GM12878 (cell line): ENCODE measurements at regions of chr10 and their contacts with region 1.

Region 1: DNA sequence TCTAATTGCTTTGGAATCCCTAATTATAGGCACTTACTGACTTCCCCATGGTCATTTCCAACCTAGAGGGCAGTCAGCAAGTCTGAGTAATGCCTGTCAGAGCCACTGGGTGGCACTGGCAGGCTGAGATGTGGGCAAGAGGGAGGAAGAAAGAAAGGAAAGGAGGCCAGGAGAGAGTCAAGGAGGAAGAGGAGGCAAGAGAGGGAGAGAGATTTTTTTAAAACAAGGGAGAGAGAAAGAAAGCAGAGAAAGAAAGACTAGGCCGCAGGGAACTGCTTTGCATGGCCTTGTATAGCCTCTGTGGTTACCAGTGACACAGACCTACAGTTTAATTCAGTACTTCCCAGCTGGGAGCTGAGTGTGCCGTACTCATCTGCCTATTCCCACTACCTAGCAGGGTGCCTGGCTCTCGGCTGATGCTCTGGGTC is 210.4 kb upstream of the ADO start:
- DNase-seq: peak; percentile 30
- ATAC-seq: peak; percentile 94
- H3K4me3 ChIP-seq: no peak overlapping the region
- H3K27ac ChIP-seq: no peak overlapping the region
- H3K4me1 ChIP-seq: peaks cover 7% of the 10 kb centered on the region
- H3K27me3 ChIP-seq: no peaks in the 10 kb centered on the region
- CTCF ChIP-seq: peak; percentile 90 to 97 (median 95)
- EP300 ChIP-seq: no peak
- POLR2A ChIP-seq: no peak
- RAD21 ChIP-seq: peak; percentile 100

Region 2: GRCh38 chr10:62577666-62578291 is 16.3 kb before region 1 on chr10:
- CTCF ChIA-PET with region 1: interaction called, 16 read pairs
- POLR2A ChIA-PET with region 1: no interaction called
- RAD21 ChIA-PET with region 1: interaction called, 5 read pairs
- SMC1A ChIA-PET with region 1: interaction called, 10 read pairs
- in situ Hi-C with region 1: no loop called
- intact Hi-C with region 1: no loop called
- DNase-seq: no peak
- ATAC-seq: no peak
- H3K4me3 ChIP-seq: no peak overlapping the region
- H3K27ac ChIP-seq: no peak overlapping the region
- H3K4me1 ChIP-seq: no peaks in the 10 kb centered on the region
- H3K27me3 ChIP-seq: peaks cover 0 to 2% of the 10 kb centered on the region in 2 experiments; a peak in 2 of 4 replicates
- CTCF ChIP-seq: no peak
- EP300 ChIP-seq: no peak
- POLR2A ChIP-seq: no peak
- RAD21 ChIP-seq: no peak

Region 3: DNA sequence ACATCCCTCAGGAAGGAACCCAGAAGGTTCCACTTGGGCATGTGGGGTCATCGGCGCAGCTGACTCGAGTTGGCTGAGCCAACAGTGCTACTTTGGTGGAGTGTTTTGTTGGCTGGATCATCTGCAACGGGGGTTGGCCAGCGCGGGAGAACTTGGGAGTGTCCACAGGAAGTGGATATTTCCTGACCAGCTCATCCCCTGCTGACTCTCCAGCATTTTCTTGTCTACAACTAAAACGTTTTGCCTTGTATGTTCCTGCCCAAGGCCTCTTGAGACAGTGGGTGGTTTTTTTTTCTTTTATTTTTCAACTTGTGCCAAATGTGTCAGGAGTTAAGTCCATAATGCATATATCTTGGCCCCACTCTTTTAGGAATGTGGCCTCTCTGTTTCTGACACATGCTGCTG is 11.3 kb before region 1 on chr10:
- CTCF ChIA-PET with region 1: interaction called, 16 read pairs
- POLR2A ChIA-PET with region 1: no interaction called
- RAD21 ChIA-PET with region 1: interaction called, 5 read pairs
- SMC1A ChIA-PET with region 1: interaction called, 14 read pairs
- in situ Hi-C with region 1: no loop called
- intact Hi-C with region 1: no loop called
- DNase-seq: no peak
- ATAC-seq: no peak
- H3K4me3 ChIP-seq: no peak overlapping the region
- H3K27ac ChIP-seq: no peak overlapping the region
- H3K4me1 ChIP-seq: no peaks in the 10 kb centered on the region
- H3K27me3 ChIP-seq: no peaks in the 10 kb centered on the region
- CTCF ChIP-seq: no peak
- EP300 ChIP-seq: no peak
- POLR2A ChIP-seq: no peak
- RAD21 ChIP-seq: no peak

Region 4: GRCh38 chr10:62992145-62992721 is 398.1 kb after region 1 on chr10:
- CTCF ChIA-PET with region 1: interaction called, 11 read pairs
- POLR2A ChIA-PET with region 1: no interaction called
- RAD21 ChIA-PET with region 1: interaction called, 3 read pairs
- SMC1A ChIA-PET with region 1: no interaction called
- in situ Hi-C with region 1: no loop called
- intact Hi-C with region 1: no loop called
- DNase-seq: peak; percentile 40
- ATAC-seq: peak; percentile 91
- H3K4me3 ChIP-seq: no peak overlapping the region; the same call in 1 of the 2 replicates
- H3K27ac ChIP-seq: peak overlapping the region; percentile 56
- H3K4me1 ChIP-seq: peaks cover 8% of the 10 kb centered on the region
- H3K27me3 ChIP-seq: no peaks in the 10 kb centered on the region
- CTCF ChIP-seq: no peak
- EP300 ChIP-seq: no peak; a peak in 1 of 4 replicates
- POLR2A ChIP-seq: no peak
- RAD21 ChIP-seq: no peak

Region 5: DNA sequence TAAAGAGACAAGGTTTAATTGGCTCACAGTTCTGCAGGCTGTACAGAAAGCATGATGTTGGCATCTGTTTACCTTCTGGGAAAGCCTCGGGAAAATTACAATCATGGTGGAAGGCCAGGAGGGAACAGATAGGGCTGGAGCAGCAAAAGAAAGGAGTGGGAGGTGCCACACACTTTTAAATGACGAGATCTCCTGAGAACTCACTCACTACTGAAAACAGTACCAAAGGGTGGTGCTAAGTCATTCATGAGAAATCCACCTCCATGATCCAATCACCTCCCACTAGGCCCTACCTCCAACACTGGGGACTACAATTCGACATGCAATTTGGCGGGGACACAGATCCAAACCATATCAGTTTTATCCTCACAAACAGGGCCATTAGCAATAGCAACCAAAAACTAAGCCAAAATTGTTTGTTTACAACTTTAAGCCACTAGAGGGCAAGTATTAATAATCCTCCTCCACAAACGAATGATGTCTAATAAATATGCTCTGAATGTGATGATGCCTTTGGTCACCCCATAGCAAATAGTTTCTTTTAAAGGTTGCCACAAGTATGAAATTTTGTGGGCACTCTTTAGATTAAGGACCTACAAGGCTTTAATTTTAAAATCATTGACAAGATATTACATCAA is 409.8 kb after region 1 on chr10:
- CTCF ChIA-PET with region 1: interaction called, 6 read pairs
- POLR2A ChIA-PET with region 1: no interaction called
- RAD21 ChIA-PET with region 1: interaction called, 6 read pairs
- SMC1A ChIA-PET with region 1: no interaction called
- in situ Hi-C with region 1: no loop called
- intact Hi-C with region 1: loop called (anchors 5 kb)
- DNase-seq: no peak
- ATAC-seq: peak; percentile 64; the same call in 2 of the 3 replicates
- H3K4me3 ChIP-seq: no peak overlapping the region
- H3K27ac ChIP-seq: no peak overlapping the region
- H3K4me1 ChIP-seq: no peaks in the 10 kb centered on the region
- H3K27me3 ChIP-seq: peaks cover 0 to 3% of the 10 kb centered on the region in 2 experiments; a peak in 1 of 4 replicates
- CTCF ChIP-seq: peak; percentile 28 to 53 (median 30); a peak in 4 of 6 replicates
- EP300 ChIP-seq: no peak
- POLR2A ChIP-seq: no peak
- RAD21 ChIP-seq: peak; percentile 38

Region 6: DNA sequence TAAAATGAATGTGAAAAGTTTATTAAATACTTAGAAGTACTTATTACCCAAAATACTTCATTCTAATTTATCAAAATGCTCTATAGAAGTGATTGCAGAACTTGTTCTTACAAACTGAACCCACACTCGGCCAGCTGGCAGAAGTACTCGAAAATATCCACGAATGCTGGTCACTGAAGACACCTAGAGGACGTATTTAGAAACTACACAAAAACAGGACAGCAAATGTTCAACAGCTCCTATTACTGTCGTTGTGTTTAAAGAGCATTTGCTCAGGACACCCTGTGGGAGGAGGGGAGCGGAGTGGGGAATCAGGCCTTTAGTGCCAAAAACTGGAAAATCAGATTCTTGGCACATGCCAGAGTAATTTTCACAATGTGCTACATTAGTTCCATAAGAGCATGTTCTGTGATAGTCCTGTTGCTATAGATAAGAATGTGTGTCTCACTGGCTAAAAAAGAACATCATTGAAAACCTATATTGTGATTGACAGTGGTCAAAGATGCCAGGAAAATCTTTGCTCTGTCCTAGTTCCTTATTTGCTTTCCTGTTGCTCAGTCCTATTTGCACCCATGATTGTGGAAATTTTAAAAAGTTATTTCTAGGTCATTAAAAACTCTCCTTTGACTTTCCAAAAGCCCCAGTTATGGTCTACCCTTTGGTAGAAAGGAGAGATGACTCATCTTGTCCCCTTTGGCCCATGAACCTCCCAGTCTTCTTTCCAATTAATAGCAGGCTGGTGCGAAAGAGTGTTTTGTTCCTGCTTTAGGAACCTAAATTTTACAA is 490.0 kb after region 1 on chr10:
- CTCF ChIA-PET with region 1: interaction called, 64 read pairs
- POLR2A ChIA-PET with region 1: no interaction called
- RAD21 ChIA-PET with region 1: interaction called, 38 read pairs
- SMC1A ChIA-PET with region 1: interaction called, 30 read pairs
- in situ Hi-C with region 1: loop called (anchors 5 kb)
- intact Hi-C with region 1: loop called (anchors 1 kb)
- DNase-seq: peak; percentile 38
- ATAC-seq: peak; percentile 94
- H3K4me3 ChIP-seq: no peak overlapping the region
- H3K27ac ChIP-seq: no peak overlapping the region
- H3K4me1 ChIP-seq: no peaks in the 10 kb centered on the region
- H3K27me3 ChIP-seq: no peaks in the 10 kb centered on the region; a peak in 1 of 4 replicates
- CTCF ChIP-seq: peak; percentile 63 to 84 (median 76)
- EP300 ChIP-seq: no peak
- POLR2A ChIP-seq: no peak
- RAD21 ChIP-seq: peak; percentile 99